ENCODE measurements at regions of chr2 and their contacts with region 1.

Region 1: GRCh38 chr2:152627351-152627957 is 89.8 kb downstream of the PRPF40A start:
- DNase-seq: no peak
- H3K4me3 ChIP-seq: no peak overlapping the region
- CTCF ChIP-seq: peak; percentile 42

Region 2: DNA sequence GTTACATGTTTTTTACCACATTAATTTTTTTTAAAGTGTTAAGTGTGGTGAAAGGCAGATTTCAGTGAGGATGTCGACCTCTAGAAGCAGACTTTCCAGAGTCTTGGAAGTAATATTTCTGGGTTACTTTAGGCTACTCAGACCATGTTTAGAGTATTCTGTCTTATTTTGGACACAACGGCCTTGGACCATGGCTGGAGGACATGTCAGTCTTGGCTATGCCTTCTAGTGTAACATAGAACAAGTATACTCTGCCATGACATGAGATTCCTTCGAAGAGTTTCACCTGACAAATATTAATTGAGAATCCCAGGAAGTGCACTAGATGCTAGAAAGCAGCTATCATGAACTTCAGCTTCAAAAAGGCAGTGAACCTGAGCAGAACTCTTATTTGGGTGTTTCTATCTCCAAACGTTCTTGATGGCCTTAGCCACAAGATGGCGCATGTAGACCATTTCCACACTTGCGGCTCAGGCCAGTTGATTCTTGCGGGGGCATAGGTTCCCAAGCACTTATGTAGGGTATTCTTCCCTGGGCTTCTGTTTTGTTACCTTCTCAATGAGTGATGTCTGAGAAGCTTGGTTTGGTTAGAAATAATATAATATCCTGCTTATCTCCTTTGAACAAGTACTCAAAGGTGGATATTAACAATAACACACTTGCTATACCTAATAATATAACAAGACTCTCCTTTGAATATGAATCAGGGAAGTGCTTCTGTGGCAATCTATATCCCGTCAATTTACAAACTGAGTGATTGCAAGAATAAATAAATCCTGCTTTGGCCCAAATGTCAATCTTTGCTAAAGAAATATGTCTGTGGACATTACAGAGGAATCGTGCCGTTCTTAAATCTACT is 590.6 kb before region 1 on chr2:
- CTCF ChIA-PET with region 1: interaction called, 10 read pairs
- POLR2A ChIA-PET with region 1: no interaction called
- DNase-seq: peak; percentile 16
- H3K4me3 ChIP-seq: no peak overlapping the region
- CTCF ChIP-seq: peak; percentile 77

Region 3: DNA sequence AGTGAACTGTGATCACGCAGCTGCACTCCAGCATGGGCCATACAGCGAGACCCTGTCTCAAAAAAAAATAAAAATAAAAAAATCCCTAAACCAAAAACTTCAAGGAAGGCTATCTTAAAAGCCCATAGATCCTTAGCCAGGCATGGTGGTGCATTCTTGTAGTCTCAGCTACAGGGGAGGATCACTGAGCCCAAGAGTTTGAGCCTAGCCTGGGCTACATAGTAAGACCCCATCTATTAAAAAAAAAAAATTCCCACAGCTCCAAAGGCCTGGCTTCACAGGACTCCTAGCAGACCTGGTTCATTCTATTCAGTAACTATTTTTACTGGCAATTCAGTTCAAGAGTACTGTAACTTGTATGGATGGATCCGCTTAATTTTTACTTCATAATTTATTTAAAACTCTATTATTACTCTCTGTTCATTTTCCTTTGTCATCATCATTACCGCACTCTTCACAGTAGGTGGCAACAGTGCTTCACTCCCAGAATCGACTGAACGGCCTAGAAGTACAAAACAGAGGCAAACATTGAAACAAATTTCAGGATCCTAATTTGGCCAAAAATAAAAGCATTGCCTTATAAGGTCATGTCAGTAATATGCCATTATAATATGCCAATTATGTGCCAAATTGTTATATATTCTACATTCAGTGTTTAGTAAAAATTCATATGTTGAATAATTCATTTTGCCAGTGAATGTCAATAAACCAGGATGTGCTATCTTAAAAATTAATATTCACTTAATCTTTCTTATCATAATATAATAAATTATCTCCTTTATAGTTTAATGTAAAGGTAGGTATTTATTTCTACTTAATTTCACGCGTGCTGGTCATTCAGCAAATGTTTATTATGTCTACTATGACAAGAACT is 437.6 kb before region 1 on chr2:
- CTCF ChIA-PET with region 1: interaction called, 43 read pairs
- POLR2A ChIA-PET with region 1: no interaction called
- DNase-seq: no peak
- H3K4me3 ChIP-seq: no peak overlapping the region
- CTCF ChIP-seq: peak; percentile 67

Region 4: DNA sequence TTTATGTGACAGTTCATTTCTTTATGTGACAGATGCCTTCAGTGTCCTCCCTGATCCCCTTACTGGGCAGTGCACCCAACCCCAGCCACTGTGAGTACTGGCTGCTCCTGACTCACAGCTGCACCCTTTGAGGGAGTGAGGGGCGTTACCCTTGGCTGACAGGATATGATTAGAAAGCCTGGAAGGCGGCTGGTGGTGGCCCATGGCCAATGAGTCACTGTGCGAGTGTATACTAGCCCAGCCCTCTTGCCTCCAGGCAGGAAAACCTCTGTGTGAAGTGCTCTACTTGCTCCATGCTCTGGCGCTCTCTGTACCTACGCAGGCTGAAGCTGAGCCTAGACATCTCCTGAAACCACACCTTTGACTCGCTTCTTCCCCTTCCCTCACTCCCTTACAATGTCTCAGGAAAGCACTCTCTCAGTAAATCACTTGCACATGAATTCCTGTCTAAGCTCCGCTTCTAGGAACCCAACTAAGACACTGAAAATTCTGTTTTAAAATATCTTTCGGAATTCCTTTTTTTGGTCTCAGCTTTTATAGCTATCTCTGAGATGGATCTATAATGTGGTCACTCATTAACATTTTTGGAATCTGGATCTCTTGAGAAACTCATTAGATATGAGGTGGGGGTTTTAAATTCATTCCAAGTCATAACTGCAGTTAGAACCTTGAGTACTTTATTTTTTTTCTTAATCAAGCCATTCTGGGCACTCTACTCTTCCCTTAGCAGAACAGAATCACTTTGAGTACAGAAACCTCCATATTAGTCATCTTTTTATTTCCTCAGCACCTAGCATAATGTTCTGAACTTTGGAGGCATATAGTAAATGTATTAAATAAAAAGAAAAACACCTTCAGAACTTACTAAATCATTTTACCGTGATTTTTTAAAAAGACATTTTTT is 426.6 kb before region 1 on chr2:
- CTCF ChIA-PET with region 1: interaction called, 13 read pairs
- POLR2A ChIA-PET with region 1: no interaction called
- DNase-seq: peak; percentile 83
- H3K4me3 ChIP-seq: peak overlapping the region; percentile 53
- CTCF ChIP-seq: no peak

Region 5: DNA sequence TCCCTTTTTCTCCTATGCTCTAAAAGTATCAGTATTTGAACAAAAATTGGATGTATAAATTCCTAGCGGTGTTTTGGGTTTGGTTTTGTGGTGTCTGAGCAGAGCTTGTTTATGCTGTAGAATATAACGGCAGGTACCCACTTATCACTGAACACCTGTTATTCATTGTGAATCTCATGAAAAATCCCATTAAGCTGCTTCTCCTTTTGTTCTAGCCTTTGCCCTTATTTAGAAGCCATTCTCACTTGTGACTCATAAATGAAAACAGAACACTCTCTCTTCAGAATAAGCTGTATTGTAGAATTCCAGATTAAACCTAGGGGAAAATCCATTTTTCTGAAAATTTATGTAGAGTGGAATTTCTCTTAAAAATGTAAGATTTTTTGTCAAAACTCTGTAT is 14.2 kb before region 1 on chr2:
- CTCF ChIA-PET with region 1: interaction called, 21 read pairs
- POLR2A ChIA-PET with region 1: no interaction called
- DNase-seq: no peak
- H3K4me3 ChIP-seq: no peak overlapping the region
- CTCF ChIP-seq: no peak